GM13977 (cell line): ENCODE measurements at regions of chr18 and their contacts with region 1.

Region 1: DNA sequence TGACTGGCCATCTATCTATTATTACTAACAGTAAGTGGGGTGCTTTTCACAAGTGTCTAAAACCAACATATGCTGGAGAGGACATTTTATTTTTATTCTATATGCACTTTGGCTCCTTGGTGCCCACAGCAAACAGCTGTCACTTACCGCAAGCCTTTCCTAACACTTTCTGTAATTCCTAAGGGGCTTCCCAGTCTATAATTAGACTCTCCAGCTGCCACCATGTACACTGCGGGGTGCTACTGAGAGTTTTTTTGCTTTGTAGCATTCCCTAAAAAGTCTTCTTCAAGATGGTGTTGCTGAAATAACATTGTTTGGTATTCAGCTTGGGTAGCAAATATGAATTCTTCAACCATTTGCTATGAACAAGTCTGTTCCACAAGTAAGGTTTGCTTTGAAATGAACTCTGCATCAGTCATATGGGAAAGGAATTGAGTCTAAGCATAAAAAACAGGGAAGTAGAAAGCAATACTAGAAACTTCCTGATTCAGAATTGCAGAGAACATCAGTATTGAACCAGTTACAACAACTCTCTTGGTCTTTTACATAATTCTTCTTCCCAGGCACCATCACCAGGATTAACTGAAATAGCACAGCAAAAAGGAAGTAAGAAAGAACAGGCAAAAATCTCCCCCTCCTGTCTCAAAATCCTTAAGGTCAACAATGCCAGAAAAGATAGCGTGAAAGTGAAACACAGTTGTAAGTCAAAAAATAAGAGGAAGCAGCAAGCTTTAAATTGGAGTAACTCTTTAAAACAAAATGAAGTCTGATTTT is 28.6 kb downstream of the EPB41L3 start:
- DNase-seq: no peak
- CTCF ChIP-seq: no peak

Region 2: DNA sequence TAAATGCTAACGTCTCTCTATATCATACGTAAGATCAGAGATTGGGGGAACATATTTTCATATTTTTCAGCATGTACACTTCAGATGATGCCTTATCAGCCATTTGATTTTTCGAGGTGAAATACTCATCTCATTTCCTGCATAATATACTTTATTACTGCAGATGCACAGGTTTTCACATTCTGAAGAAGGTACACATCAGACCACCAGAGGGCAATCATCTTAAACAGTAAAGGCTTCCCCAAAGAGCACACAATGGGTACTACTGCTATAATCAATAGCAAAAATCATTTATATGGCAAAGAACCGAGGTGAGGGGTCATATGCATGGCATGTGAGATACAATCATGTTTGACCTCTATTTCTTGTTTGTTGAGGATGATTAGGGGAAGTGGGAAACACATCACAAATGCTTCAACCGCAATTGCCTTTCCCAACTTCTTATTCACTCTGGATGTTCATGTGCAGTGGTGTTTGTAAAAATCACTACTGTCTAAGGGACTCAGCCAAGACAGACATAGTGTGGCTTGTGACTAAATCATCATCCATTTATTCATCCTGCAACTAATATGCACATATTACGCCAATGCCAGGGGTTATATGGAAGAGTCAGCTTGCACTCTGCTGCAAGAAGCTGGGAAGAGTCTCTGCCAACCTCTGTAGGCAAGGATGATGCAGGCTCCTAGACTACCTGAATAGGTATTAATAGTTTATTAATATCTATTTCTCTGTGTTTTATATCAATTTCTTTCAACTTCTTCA is 90.1 kb before region 1 on chr18:
- in situ Hi-C with region 1: loop called (anchors 25 kb)
- DNase-seq: peak; percentile 15
- CTCF ChIP-seq: peak; percentile 48